CD4-positive, alpha-beta memory T cell (primary cell): ENCODE measurements at regions of chr13 and their contacts with region 1.

Region 1: DNA sequence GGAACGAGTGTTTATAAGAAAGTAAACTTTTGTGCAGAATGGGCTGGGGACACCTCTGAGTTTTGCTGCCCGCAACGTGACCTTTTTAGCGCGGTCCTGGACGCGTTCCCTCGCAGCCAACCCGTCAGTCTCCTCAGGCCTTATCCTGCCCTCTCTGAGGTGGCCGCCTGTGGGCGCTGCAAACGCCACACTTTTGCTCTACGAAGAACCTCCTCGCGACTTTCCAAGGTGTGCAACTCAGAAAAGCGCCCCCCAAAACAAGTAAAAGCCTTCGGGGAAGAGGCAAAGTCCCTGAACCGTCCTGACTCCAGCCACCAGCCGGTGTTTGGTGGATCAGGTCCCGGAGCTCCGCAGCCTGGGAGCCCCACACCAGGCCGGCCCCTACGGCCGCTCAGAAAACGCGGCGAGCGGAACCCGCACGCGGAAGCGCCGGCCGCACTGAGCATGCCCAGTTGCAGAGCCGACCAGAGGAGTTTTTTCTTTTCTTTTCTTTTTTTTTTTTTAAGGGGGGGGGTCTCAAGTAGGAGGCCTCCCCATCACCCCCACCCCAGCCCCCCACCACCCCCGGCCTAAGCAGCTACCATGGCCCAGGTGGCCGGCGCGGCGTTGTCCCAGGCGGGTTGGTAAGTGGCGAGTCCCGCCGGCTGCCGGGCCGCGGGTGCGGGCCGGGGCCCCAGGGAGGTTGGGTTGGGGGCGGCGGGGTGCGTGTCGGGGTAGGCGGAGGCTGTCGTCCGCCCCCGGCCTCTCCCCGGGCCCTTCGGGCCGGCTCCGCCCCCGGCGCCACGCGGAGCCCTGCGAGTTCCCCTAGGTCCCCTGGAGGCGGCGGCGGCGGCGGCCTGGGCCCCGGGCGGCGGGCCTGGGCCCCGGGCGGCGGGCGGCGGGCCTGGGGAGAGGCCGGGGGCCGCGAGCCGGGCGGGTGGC is at the start of gene TDRD3:
- DNase-seq: peak; percentile 81 to 85 (median 84)
- H3K4me3 ChIP-seq: peak within 1 kb of the TSS; percentile 67 to 88
- H3K4me3 Mint-ChIP-seq: peak within 1 kb of the TSS; percentile 90 to 96 (median 95)
- H3K27ac ChIP-seq: peak within 1 kb of the TSS; percentile 76
- H3K27ac Mint-ChIP-seq: peak within 1 kb of the TSS; percentile 94 to 97 (median 96)
- H3K4me1 ChIP-seq: peaks cover 32% of the 10 kb centered on the region
- H3K4me1 Mint-ChIP-seq: peaks cover 21 to 50% (median 29%) of the 10 kb centered on the region in 4 donors
- H3K27me3 ChIP-seq: no peaks in the 10 kb centered on the region
- H3K27me3 Mint-ChIP-seq: no peaks in the 10 kb centered on the region
- total RNA-seq, gene TDRD3: 29.4 to 34.9 TPM

Region 2: GRCh38 chr13:60163478-60164233 is 233.4 kb before region 1 on chr13 and contains the start of gene DIAPH3:
- CTCF ChIA-PET with region 1: no interaction called
- POLR2A ChIA-PET with region 1: interaction called, 5 read pairs
- intact Hi-C with region 1: loop called (anchors 2 kb)
- DNase-seq: peak; percentile 88 to 90 (median 89)
- H3K4me3 ChIP-seq: peak within 1 kb of the TSS; percentile 75 to 95
- H3K4me3 Mint-ChIP-seq: peak within 1 kb of the TSS; percentile 91 to 97 (median 95)
- H3K27ac ChIP-seq: peak within 1 kb of the TSS; percentile 52
- H3K27ac Mint-ChIP-seq: peak within 1 kb of the TSS; percentile 86 to 97 (median 96)
- H3K4me1 ChIP-seq: peaks cover 18% of the 10 kb centered on the region
- H3K4me1 Mint-ChIP-seq: peaks cover 19 to 33% (median 26%) of the 10 kb centered on the region in 4 donors
- H3K27me3 ChIP-seq: no peaks in the 10 kb centered on the region
- H3K27me3 Mint-ChIP-seq: no peaks in the 10 kb centered on the region
- total RNA-seq, gene DIAPH3: not detected

Region 3: DNA sequence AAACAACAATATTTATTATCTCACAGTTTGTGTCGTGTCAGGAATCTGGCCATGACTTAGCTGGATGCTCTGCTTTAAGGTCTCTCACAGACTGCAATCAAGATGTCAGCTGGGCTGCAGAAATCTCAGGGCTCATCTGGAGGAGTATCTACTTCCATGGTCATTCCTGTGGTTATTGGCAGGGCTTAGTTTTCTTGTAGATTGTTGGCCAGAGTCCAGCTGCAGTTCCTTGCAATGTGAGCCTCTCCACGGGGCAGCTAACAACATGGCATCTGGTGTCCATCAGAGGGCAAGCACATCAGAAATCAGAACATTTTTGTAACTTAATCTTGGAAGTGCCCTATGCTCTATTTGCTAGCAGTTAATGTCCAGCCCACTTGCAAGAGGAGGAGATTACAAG is 45.7 kb before region 1 on chr13:
- CTCF ChIA-PET with region 1: no interaction called
- POLR2A ChIA-PET with region 1: no interaction called
- intact Hi-C with region 1: no loop called
- DNase-seq: no peak
- H3K4me3 ChIP-seq: no peak overlapping the region
- H3K4me3 Mint-ChIP-seq: no peak overlapping the region
- H3K27ac ChIP-seq: no peak overlapping the region
- H3K27ac Mint-ChIP-seq: no peak overlapping the region
- H3K4me1 ChIP-seq: no peaks in the 10 kb centered on the region
- H3K4me1 Mint-ChIP-seq: no peaks in the 10 kb centered on the region
- H3K27me3 ChIP-seq: no peaks in the 10 kb centered on the region
- H3K27me3 Mint-ChIP-seq: peaks cover 17 to 25% of the 10 kb centered on the region in 2 donors

Region 4: GRCh38 chr13:60372141-60372540 is 24.9 kb before region 1 on chr13:
- CTCF ChIA-PET with region 1: no interaction called
- POLR2A ChIA-PET with region 1: no interaction called
- intact Hi-C with region 1: loop called (anchors 1 kb)
- DNase-seq: no peak
- H3K4me3 ChIP-seq: no peak overlapping the region
- H3K4me3 Mint-ChIP-seq: no peak overlapping the region
- H3K27ac ChIP-seq: no peak overlapping the region
- H3K27ac Mint-ChIP-seq: no peak overlapping the region
- H3K4me1 ChIP-seq: no peaks in the 10 kb centered on the region
- H3K4me1 Mint-ChIP-seq: peaks cover 0 to 7% (median under 1%) of the 10 kb centered on the region in 4 donors
- H3K27me3 ChIP-seq: no peaks in the 10 kb centered on the region
- H3K27me3 Mint-ChIP-seq: peaks cover 3 to 7% of the 10 kb centered on the region in 2 donors